ENCODE measurements at regions of chr15 and their contacts with region 1.

Region 1: DNA sequence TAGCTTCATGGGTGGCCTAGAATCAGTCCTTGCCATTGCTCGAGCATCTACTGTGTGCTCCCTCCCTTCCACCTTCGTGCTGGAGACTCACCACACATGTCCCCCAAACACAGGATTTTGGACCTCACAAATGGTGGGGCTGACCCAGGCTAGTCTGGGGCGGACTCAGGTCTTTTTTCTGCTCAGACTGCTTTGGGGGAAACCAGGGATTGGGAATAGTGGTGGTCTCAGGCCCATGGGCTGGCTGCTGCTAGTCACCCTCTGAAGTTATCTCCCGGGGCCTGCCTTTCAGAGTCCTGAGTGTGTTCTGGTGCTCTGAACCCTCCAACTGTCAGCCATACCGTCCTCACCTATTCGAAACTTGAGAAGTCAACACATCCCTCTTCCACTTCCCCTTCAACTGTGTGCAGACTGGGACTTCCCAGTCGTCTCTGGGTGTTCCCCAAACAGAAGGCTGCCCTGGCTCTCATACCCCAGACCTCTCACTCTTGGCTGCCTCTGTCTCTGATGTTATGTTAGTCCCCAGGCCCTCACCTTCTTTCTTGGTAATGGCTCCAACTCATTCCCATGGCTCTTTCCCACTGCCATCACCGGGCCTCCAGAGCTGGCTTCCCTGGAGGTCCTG is 46.0 kb downstream of the PPCDC start:
- DNase-seq: peak; percentile 87
- ATAC-seq: peak; percentile 92
- H3K4me3 ChIP-seq: no peak overlapping the region
- H3K27ac ChIP-seq: peak overlapping the region; percentile 89
- H3K4me1 ChIP-seq: peaks cover 58% of the 10 kb centered on the region
- H3K27me3 ChIP-seq: no peaks in the 10 kb centered on the region
- CTCF ChIP-seq: no peak
- EP300 ChIP-seq: peak; percentile 90 to 91; a peak in 3 of 4 replicates
- POLR2A ChIP-seq: peak; percentile 65
- RAD21 ChIP-seq: no peak; the same call in 1 of the 2 replicates

Region 2: GRCh38 chr15:75054172-75054897 is 15.1 kb before region 1 on chr15:
- CTCF ChIA-PET with region 1: interaction called, 6 read pairs
- POLR2A ChIA-PET with region 1: interaction called, 4 read pairs
- RAD21 ChIA-PET with region 1: interaction called, 4 read pairs
- SMC1A ChIA-PET with region 1: interaction called, 21 read pairs
- in situ Hi-C with region 1: no loop called
- intact Hi-C with region 1: no loop called
- DNase-seq: no peak
- ATAC-seq: no peak
- H3K4me3 ChIP-seq: no peak overlapping the region
- H3K27ac ChIP-seq: no peak overlapping the region
- H3K4me1 ChIP-seq: peaks cover 7% of the 10 kb centered on the region
- H3K27me3 ChIP-seq: no peaks in the 10 kb centered on the region
- CTCF ChIP-seq: no peak
- EP300 ChIP-seq: no peak
- POLR2A ChIP-seq: no peak
- RAD21 ChIP-seq: no peak

Region 3: GRCh38 chr15:75097937-75098336 is 28.5 kb after region 1 on chr15:
- CTCF ChIA-PET with region 1: interaction called, 5 read pairs
- POLR2A ChIA-PET with region 1: interaction called, 46 read pairs
- RAD21 ChIA-PET with region 1: interaction called, 25 read pairs
- SMC1A ChIA-PET with region 1: interaction called, 42 read pairs
- in situ Hi-C with region 1: no loop called
- intact Hi-C with region 1: loop called (anchors 2 kb)
- DNase-seq: no peak
- ATAC-seq: no peak
- H3K4me3 ChIP-seq: no peak overlapping the region
- H3K27ac ChIP-seq: no peak overlapping the region
- H3K4me1 ChIP-seq: peaks cover 20% of the 10 kb centered on the region
- H3K27me3 ChIP-seq: no peaks in the 10 kb centered on the region
- CTCF ChIP-seq: no peak
- EP300 ChIP-seq: no peak
- POLR2A ChIP-seq: no peak
- RAD21 ChIP-seq: no peak

Region 4: DNA sequence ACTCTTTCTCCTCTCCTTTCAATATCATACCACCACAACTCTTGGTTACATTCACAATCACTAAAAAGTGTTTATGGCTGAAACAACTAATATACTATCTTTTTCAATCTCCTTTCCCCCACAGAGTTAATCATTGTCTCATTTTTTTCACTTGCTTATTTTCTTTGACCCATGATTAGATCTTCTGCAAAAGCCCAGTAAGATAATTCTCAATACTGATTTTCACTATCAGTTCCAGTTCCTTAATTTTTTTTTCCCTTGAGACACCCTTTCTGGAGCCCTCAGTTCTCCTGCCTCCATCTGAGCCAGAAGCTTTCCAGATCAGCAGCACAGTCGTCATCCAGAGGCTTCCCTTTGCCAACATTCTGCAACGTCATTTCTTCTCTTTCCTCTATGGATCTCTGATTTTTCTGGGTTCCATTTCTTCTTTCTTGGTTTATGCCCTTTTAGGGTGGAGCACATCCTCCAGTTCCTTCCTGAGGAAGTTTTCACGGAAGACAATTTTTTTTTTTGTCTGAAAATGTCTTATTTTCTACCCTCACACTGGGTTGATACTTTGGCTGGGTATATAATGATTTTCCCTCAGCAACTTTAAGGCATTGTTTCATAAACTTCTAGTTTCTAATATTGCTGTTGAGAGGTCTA is 43.6 kb after region 1 on chr15:
- CTCF ChIA-PET with region 1: interaction called, 3 read pairs
- POLR2A ChIA-PET with region 1: interaction called, 16 read pairs
- RAD21 ChIA-PET with region 1: interaction called, 51 read pairs
- SMC1A ChIA-PET with region 1: interaction called, 17 read pairs
- in situ Hi-C with region 1: no loop called
- intact Hi-C with region 1: loop called (anchors 5 kb)
- DNase-seq: peak; percentile 91
- ATAC-seq: peak; percentile 78
- H3K4me3 ChIP-seq: no peak overlapping the region
- H3K27ac ChIP-seq: peak overlapping the region; percentile 99
- H3K4me1 ChIP-seq: peaks cover 62% of the 10 kb centered on the region
- H3K27me3 ChIP-seq: no peaks in the 10 kb centered on the region
- CTCF ChIP-seq: no peak
- EP300 ChIP-seq: peak; percentile 94 to 98; a peak in 3 of 4 replicates
- POLR2A ChIP-seq: no peak
- RAD21 ChIP-seq: no peak; the same call in 1 of the 2 replicates

Region 5: DNA sequence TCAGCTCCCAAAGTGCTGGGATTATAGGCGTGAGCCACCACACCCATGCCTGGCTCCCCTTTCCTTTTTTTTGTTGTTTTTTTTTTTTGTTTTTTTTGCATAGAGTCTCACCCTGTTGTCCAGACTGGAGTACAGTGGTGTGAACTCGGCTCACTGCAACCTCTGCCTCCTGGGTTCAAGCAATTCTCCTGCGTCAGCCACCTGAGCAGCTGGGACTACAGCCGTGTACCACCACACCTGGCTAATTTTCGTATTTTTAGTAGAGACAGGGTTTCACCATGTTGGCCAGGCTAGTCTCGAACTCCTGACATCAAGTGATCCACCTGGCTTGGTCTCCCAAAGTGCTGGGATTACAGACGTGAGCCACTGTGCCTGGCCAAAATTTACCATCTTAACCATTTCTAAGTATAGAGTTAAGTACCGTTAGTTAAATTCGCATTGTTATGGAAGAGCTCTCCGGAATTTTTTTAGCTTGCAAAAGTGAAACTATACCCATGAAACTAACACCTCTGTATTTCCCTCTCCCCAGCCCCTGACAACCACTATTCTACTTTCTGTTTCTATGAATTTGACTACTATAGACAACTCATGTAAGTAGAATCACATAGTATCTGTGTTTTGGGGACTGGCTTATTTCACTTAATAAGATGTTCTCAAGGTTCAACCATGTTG is 61.3 kb after region 1 on chr15:
- CTCF ChIA-PET with region 1: interaction called, 5 read pairs
- POLR2A ChIA-PET with region 1: interaction called, 6 read pairs
- RAD21 ChIA-PET with region 1: interaction called, 28 read pairs
- SMC1A ChIA-PET with region 1: interaction called, 26 read pairs
- in situ Hi-C with region 1: no loop called
- intact Hi-C with region 1: no loop called
- DNase-seq: peak; percentile 89
- ATAC-seq: peak; percentile 92
- H3K4me3 ChIP-seq: peak overlapping the region; percentile 13; the same call in 1 of the 2 replicates
- H3K27ac ChIP-seq: peak overlapping the region; percentile 99
- H3K4me1 ChIP-seq: peaks cover 67% of the 10 kb centered on the region
- H3K27me3 ChIP-seq: no peaks in the 10 kb centered on the region
- CTCF ChIP-seq: no peak
- EP300 ChIP-seq: peak; percentile 55 to 82; a peak in 3 of 4 replicates
- POLR2A ChIP-seq: no peak
- RAD21 ChIP-seq: 0 out of 2 replicates have a peak, but pooled peaks have one; percentile 9